Tibial artery (tissue), 4 donors: ENCODE measurements at regions of chr19 and their contacts with region 1.

Region 1: DNA sequence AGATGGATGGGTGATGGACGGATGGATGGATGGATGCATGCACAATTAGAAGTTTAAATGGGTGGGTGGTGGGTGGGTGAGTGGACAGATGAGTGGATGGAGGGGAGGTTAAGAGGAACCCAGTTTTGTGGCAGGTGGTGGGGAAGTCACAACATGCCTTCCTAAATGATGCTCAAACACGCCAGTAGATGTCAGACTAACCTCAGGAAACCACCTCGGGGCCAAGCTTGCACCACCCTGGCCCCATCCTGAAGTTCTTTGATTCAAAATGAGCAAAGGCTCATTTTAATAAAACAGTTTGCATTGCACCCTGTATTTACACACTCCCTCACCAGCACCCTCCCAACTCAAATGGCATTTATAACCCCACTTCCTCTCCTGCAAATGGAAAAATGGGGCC is 91.4 kb upstream of the CACNA1A start:
- DNase-seq: peak in 1 of 2 donors; percentile 32
- H3K4me3 ChIP-seq: no peak overlapping the region
- H3K27ac ChIP-seq: no peak overlapping the region
- H3K4me1 ChIP-seq: no peaks in the 10 kb centered on the region
- H3K27me3 ChIP-seq: peaks cover 0 to 39% of the 10 kb centered on the region in 2 donors
- CTCF ChIP-seq: peak; percentile 49 to 74

Region 2: DNA sequence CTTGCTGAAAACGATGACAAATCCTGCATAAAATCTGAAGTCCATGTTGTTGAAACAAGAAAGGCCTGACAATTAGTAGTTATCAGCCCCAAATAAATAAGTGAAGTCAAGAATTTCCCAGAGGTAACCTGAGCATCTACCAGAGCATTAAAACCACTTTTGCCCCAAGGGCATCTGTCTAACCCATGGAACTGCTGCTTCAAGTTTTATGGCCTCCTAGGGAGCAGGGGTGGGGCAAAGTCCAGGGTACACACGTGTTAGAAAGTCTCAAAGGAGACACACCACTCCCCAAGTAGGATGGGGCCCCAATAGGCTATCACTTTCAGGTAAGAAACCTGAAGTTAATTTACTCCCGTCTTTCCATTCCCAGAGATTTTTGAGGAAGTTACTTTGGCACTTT is 172.5 kb before region 1 on chr19:
- intact Hi-C with region 1: no loop called
- DNase-seq: no peak
- H3K4me3 ChIP-seq: no peak overlapping the region
- H3K27ac ChIP-seq: no peak overlapping the region
- H3K4me1 ChIP-seq: no peaks in the 10 kb centered on the region
- H3K27me3 ChIP-seq: no peaks in the 10 kb centered on the region
- CTCF ChIP-seq: no peak

Region 3: GRCh38 chr19:13718733-13719132 is 121.1 kb after region 1 on chr19:
- intact Hi-C with region 1: loop called (anchors 5 kb)
- DNase-seq: no peak
- H3K4me3 ChIP-seq: no peak overlapping the region
- H3K27ac ChIP-seq: no peak overlapping the region
- H3K4me1 ChIP-seq: peaks cover 0 to 7% (median 3%) of the 10 kb centered on the region in 4 donors
- H3K27me3 ChIP-seq: no peaks in the 10 kb centered on the region
- CTCF ChIP-seq: peak in 1 of 2 experiments; percentile 33

Region 4: DNA sequence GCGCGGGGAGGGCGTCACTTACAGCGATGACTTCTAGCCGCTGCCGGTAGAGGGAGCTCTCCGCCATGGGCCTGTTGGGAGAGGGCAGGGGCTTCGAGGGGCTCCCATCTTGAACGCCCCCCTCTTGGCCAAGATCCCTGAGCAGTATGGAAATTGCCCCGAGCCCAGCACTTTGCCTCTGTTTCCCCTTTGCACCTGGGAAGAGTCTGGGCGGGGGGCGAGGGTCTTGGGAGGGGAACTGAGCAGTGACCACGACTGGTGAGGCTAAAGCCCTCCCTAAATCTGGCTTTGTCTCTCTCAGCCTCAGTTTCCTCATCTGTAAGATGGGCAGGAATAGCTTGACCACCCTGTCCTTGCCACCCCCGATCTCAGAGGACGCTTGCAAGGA is 461.4 kb after region 1 on chr19:
- intact Hi-C with region 1: loop called (anchors 10 kb)
- DNase-seq: no peak
- H3K4me3 ChIP-seq: no peak overlapping the region
- H3K27ac ChIP-seq: no peak overlapping the region
- H3K4me1 ChIP-seq: peaks cover 0 to 20% (median 10%) of the 10 kb centered on the region in 4 donors
- H3K27me3 ChIP-seq: peaks cover 0 to 65% of the 10 kb centered on the region in 2 donors
- CTCF ChIP-seq: peak in 1 of 2 experiments; percentile 26